HEK293T (cell line): ENCODE measurements at regions of chr1 and their contacts with region 1.

Region 1: GRCh38 chr1:154198756-154199562 is 7.1 kb upstream of the TPM3 start:
- DNase-seq: peak; percentile 67

Region 2: GRCh38 chr1:153903841-153904455 is 295.0 kb before region 1 on chr1:
- CTCF ChIA-PET with region 1: no interaction called
- POLR2A ChIA-PET with region 1: no interaction called
- DNase-seq: no peak

Region 3: GRCh38 chr1:154220071-154220969 is 21.4 kb after region 1 on chr1 and contains the start of gene UBAP2L:
- CTCF ChIA-PET with region 1: no interaction called
- POLR2A ChIA-PET with region 1: interaction called, 14 read pairs
- DNase-seq: peak; percentile 98